CD8-positive, alpha-beta T cell (primary cell): ENCODE measurements at regions of chr7 and their contacts with region 1.

Region 1: DNA sequence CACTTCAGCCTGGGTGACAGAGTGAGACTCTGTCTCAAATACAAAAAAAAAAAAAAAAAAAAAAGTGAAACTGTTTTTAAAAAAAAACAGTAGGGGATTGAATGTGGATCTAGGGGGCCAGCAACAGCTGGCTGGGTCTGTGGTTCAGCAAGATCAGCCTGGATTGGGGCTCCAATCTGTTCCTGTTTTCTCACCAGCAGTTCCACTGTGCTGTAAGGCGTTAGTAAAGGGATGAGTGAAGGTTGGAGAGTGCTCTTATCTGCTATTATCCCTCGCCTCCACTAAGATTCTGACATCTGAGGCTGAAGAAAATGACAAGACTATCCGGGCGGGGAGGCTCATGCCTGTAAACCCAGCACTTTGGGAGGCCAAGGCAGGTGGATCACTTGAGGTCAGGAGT is 41.6 kb upstream of the GTF2IRD1 start:
- DNase-seq: no peak
- ATAC-seq: no peak
- H3K4me3 ChIP-seq: no peak overlapping the region
- H3K4me3 Mint-ChIP-seq: no peak overlapping the region
- H3K27ac ChIP-seq: no peak overlapping the region
- H3K27ac Mint-ChIP-seq: no peak overlapping the region
- H3K4me1 ChIP-seq: no peaks in the 10 kb centered on the region
- H3K4me1 Mint-ChIP-seq: no peaks in the 10 kb centered on the region
- H3K27me3 ChIP-seq: no peaks in the 10 kb centered on the region
- H3K27me3 Mint-ChIP-seq: no peaks in the 10 kb centered on the region
- CTCF ChIP-seq: no peak

Region 2: GRCh38 chr7:74306730-74307469 is 105.2 kb before region 1 on chr7:
- CTCF ChIA-PET with region 1: no interaction called
- POLR2A ChIA-PET with region 1: no interaction called
- intact Hi-C with region 1: no loop called
- DNase-seq: peak in 1 of 9 experiments; percentile 7
- ATAC-seq: peak; percentile 58
- H3K4me3 ChIP-seq: peak overlapping the region; percentile 12 to 18
- H3K4me3 Mint-ChIP-seq: peak overlapping the region; percentile 72
- H3K27ac ChIP-seq: no peak overlapping the region
- H3K27ac Mint-ChIP-seq: no peak overlapping the region
- H3K4me1 ChIP-seq: peaks cover 16% of the 10 kb centered on the region
- H3K4me1 Mint-ChIP-seq: peaks cover 13% of the 10 kb centered on the region
- H3K27me3 ChIP-seq: peaks cover 0 to 4% of the 10 kb centered on the region in 2 experiments
- H3K27me3 Mint-ChIP-seq: peaks cover 3% of the 10 kb centered on the region
- CTCF ChIP-seq: no peak

Region 3: GRCh38 chr7:74365322-74366022 is 46.6 kb before region 1 on chr7:
- CTCF ChIA-PET with region 1: no interaction called
- POLR2A ChIA-PET with region 1: no interaction called
- intact Hi-C with region 1: no loop called
- DNase-seq: no peak
- ATAC-seq: no peak
- H3K4me3 ChIP-seq: no peak overlapping the region
- H3K4me3 Mint-ChIP-seq: no peak overlapping the region
- H3K27ac ChIP-seq: no peak overlapping the region
- H3K27ac Mint-ChIP-seq: no peak overlapping the region
- H3K4me1 ChIP-seq: no peaks in the 10 kb centered on the region
- H3K4me1 Mint-ChIP-seq: no peaks in the 10 kb centered on the region
- H3K27me3 ChIP-seq: no peaks in the 10 kb centered on the region
- H3K27me3 Mint-ChIP-seq: no peaks in the 10 kb centered on the region
- CTCF ChIP-seq: no peak

Region 4: GRCh38 chr7:74388880-74389415 is 23.1 kb before region 1 on chr7:
- CTCF ChIA-PET with region 1: no interaction called
- POLR2A ChIA-PET with region 1: no interaction called
- intact Hi-C with region 1: no loop called
- DNase-seq: no peak
- ATAC-seq: no peak
- H3K4me3 ChIP-seq: no peak overlapping the region
- H3K4me3 Mint-ChIP-seq: no peak overlapping the region
- H3K27ac ChIP-seq: no peak overlapping the region
- H3K27ac Mint-ChIP-seq: no peak overlapping the region
- H3K4me1 ChIP-seq: no peaks in the 10 kb centered on the region
- H3K4me1 Mint-ChIP-seq: no peaks in the 10 kb centered on the region
- H3K27me3 ChIP-seq: no peaks in the 10 kb centered on the region
- H3K27me3 Mint-ChIP-seq: no peaks in the 10 kb centered on the region
- CTCF ChIP-seq: no peak

Region 5: DNA sequence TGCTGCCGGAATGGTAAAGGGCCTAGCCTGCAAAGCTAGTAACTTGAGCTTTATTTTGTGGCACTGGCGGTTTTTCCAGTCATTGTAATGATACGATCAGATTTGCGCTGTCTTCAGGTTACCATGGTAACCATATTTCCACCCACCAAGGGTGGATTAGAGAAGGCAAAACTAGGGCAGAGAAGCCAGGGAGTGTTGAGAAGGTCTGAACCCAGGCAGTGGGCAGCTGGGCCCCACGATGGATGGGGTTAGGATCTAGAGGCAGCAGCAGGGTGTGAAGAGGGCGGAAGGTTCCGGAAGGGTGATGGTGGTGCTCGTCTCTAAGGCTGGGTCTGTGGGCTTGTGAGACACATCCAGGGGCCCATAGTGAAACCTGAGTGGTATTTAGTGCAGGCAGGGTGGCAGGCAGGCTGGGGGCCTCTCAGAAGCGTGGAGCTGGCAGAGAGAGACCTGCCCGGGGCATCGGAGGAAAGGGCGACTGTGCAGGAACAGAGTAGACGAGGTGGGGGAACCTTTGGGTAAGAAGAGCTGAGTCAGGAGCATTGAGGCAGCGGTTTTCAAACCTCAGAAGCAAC is 157.5 kb after region 1 on chr7:
- CTCF ChIA-PET with region 1: interaction called, 33 read pairs
- POLR2A ChIA-PET with region 1: no interaction called
- intact Hi-C with region 1: loop called in 1 of 2 experiments (anchors 2 kb)
- DNase-seq: no peak
- ATAC-seq: no peak
- H3K4me3 ChIP-seq: no peak overlapping the region
- H3K4me3 Mint-ChIP-seq: no peak overlapping the region
- H3K27ac ChIP-seq: no peak overlapping the region
- H3K27ac Mint-ChIP-seq: no peak overlapping the region
- H3K4me1 ChIP-seq: no peaks in the 10 kb centered on the region
- H3K4me1 Mint-ChIP-seq: no peaks in the 10 kb centered on the region
- H3K27me3 ChIP-seq: peaks cover 0 to 2% of the 10 kb centered on the region in 2 experiments
- H3K27me3 Mint-ChIP-seq: no peaks in the 10 kb centered on the region
- CTCF ChIP-seq: no peak

Region 6: GRCh38 chr7:74684921-74685320 is 272.9 kb after region 1 on chr7:
- CTCF ChIA-PET with region 1: no interaction called
- POLR2A ChIA-PET with region 1: no interaction called
- intact Hi-C with region 1: no loop called
- DNase-seq: no peak
- ATAC-seq: no peak
- H3K4me3 ChIP-seq: no peak overlapping the region
- H3K4me3 Mint-ChIP-seq: no peak overlapping the region
- H3K27ac ChIP-seq: no peak overlapping the region
- H3K27ac Mint-ChIP-seq: no peak overlapping the region
- H3K4me1 ChIP-seq: no peaks in the 10 kb centered on the region
- H3K4me1 Mint-ChIP-seq: peaks cover 42% of the 10 kb centered on the region
- H3K27me3 ChIP-seq: no peaks in the 10 kb centered on the region
- H3K27me3 Mint-ChIP-seq: no peaks in the 10 kb centered on the region
- CTCF ChIP-seq: no peak